OCI-LY7 (cell line): ENCODE measurements at regions of chr4 and their contacts with region 1.

Region 1: DNA sequence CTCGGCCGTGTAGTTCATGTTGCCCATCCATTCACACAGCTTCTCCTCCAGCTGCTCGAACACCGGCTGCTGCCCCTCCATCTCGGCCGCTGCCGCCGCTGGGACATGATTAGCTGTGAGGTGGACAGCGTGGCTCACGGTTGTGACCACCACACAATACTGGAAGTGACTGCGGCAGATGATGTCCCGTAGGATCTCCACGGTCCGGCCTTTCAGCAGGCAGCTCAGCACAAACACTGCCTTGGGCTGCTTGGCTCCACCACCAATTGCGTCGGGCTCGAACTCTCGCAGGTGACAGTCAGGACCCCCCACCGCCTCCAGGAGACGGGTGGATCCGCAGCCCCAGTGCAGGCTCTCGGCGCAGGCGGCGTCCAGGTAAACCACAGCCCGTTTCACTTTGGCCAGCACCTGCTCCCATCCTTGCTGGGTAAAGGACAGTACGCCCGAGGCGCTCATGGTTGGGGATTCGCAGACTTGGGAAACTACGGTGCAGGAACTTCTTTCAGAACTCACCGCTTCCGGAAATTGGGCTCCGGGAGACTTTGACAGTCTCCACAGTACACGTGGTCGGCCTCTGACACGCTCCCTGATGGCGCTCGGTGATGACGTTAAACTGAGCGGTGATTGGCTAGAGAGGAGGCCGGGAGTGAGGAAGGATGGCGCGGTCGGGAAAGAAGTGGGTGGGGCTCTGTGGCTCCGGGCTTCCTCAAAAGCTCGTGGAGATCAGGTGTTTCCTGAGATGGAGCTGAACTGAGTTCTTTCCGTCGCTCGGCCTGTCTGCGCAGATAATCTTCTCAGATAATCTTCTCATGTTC is at the start of gene SCFD2:
- DNase-seq: peak; percentile 96
- H3K4me3 ChIP-seq: peak within 1 kb of the TSS; percentile 98
- H3K27ac ChIP-seq: peak within 1 kb of the TSS; percentile 50
- H3K4me1 ChIP-seq: peaks cover 60% of the 10 kb centered on the region
- CTCF ChIP-seq: no peak
- total RNA-seq, gene SCFD2: 52.0 and 52.9 TPM in 2 replicates

Region 2: GRCh38 chr4:52550186-52550585 is 815.5 kb before region 1 on chr4:
- CTCF ChIA-PET with region 1: no interaction called
- POLR2A ChIA-PET with region 1: no interaction called
- intact Hi-C with region 1: no loop called
- DNase-seq: no peak
- H3K4me3 ChIP-seq: no peak overlapping the region
- H3K27ac ChIP-seq: no peak overlapping the region
- H3K4me1 ChIP-seq: no peaks in the 10 kb centered on the region
- CTCF ChIP-seq: no peak

Region 3: DNA sequence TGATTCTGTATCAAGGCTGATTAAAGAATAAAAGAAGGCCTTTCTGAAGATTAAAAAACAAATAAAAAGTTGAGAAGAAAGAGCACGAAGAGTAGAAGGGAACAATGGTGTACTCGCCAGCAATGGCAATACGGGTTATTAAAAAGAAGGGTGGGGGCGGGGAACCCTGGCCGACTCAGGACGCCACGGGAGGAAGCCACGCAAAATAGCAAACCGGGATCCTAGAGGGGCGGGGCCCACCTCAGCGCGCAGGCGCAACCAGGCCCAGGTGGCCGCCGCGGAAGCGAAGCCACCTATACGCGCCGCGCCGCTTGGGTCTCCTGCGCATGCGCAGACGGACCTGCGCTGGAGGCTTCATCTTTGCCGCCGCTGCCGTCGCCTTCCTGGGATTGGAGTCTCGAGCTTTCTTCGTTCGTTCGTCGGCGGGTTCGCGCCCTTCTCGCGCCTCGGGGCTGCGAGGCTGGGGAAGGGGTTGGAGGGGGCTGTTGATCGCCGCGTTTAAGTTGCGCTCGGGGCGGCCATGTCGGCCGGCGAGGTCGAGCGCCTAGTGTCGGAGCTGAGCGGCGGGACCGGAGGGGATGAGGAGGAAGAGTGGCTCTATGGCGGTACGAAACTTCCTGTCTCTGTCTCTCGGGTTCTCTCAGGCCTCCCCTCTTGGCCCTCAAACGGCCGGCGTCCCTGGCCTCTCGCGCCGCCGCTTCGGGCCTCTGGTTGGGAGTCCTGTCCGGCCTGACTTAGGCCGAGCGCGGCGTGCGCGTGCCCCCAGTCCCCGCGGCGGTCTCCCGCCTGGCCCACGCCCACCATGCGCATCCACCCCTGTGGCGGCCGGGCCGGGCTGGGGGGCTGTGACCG is 11.9 kb after region 1 on chr4 and contains the start of gene FIP1L1:
- CTCF ChIA-PET with region 1: interaction called, 4 read pairs
- POLR2A ChIA-PET with region 1: interaction called, 6 read pairs
- intact Hi-C with region 1: loop called (anchors 1 kb)
- DNase-seq: peak; percentile 97
- H3K4me3 ChIP-seq: peak within 1 kb of the TSS; percentile 98
- H3K27ac ChIP-seq: peak within 1 kb of the TSS; percentile 61
- H3K4me1 ChIP-seq: peaks cover 24% of the 10 kb centered on the region
- CTCF ChIP-seq: no peak
- total RNA-seq, gene FIP1L1: 73.2 and 83.1 TPM in 2 replicates

Region 4: DNA sequence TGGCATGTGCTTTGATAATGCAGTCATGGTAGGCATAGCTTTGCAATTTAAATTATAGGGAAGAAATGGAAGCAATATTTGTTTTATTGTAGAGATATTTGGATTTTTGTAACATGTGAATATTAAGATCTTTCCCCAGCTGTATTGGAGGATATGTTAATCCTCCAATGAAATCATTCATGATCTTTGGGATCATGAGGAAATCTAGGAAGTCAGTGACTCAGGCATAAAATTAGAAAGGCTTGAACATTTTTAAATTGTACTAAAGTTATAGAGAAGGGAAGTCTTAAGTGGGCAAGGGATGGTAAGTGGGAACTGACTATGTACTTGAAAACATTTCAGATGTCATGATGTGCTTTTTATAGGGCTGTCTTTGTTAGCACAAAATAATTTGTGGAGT is 58.6 kb after region 1 on chr4:
- CTCF ChIA-PET with region 1: no interaction called
- POLR2A ChIA-PET with region 1: no interaction called
- intact Hi-C with region 1: no loop called
- DNase-seq: no peak
- H3K4me3 ChIP-seq: no peak overlapping the region
- H3K27ac ChIP-seq: no peak overlapping the region
- H3K4me1 ChIP-seq: no peaks in the 10 kb centered on the region
- CTCF ChIP-seq: no peak

Region 5: GRCh38 chr4:53461244-53461643 is 95.6 kb after region 1 on chr4:
- CTCF ChIA-PET with region 1: no interaction called
- POLR2A ChIA-PET with region 1: no interaction called
- intact Hi-C with region 1: no loop called
- DNase-seq: no peak
- H3K4me3 ChIP-seq: no peak overlapping the region
- H3K27ac ChIP-seq: no peak overlapping the region
- H3K4me1 ChIP-seq: no peaks in the 10 kb centered on the region
- CTCF ChIP-seq: no peak